Mammary epithelial cell (primary cell): ENCODE measurements at regions of chr6 and their contacts with region 1.

Region 1: GRCh38 chr6:31680840-31681671 is at the start of gene LY6G5C:
- DNase-seq: peak; percentile 69
- H3K4me3 ChIP-seq: peak within 1 kb of the TSS; percentile 42 to 53 (median 51)
- H3K27ac ChIP-seq: peak within 1 kb of the TSS; percentile 11
- H3K4me1 ChIP-seq: peaks cover 11% of the 10 kb centered on the region
- H3K27me3 ChIP-seq: no peaks in the 10 kb centered on the region
- CTCF ChIP-seq: peak; percentile 63 to 71
- total RNA-seq, gene LY6G5C: 1.4 TPM in 1 of 2 donors, not detected in the other

Region 2: GRCh38 chr6:31225735-31226134 is 455.3 kb before region 1 on chr6:
- CTCF ChIA-PET with region 1: no interaction called
- dilution Hi-C with region 1: no loop called
- in situ Hi-C with region 1: no loop called
- intact Hi-C with region 1: no loop called
- DNase-seq: no peak
- H3K4me3 ChIP-seq: no peak overlapping the region
- H3K27ac ChIP-seq: no peak overlapping the region
- H3K4me1 ChIP-seq: no peaks in the 10 kb centered on the region
- H3K27me3 ChIP-seq: peaks cover 2% of the 10 kb centered on the region
- CTCF ChIP-seq: no peak

Region 3: GRCh38 chr6:31739639-31740396 is 58.8 kb after region 1 on chr6 and contains the start of gene MSH5:
- CTCF ChIA-PET with region 1: no interaction called
- dilution Hi-C with region 1: no loop called
- in situ Hi-C with region 1: no loop called
- intact Hi-C with region 1: loop called (anchors 1 kb)
- DNase-seq: peak; percentile 99
- H3K4me3 ChIP-seq: peak within 1 kb of the TSS; percentile 67 to 76 (median 74)
- H3K27ac ChIP-seq: peak within 1 kb of the TSS; percentile 83
- H3K4me1 ChIP-seq: peaks cover 34% of the 10 kb centered on the region
- H3K27me3 ChIP-seq: no peaks in the 10 kb centered on the region
- CTCF ChIP-seq: no peak
- total RNA-seq, gene MSH5: 9.3 to 28.3 TPM

Region 4: DNA sequence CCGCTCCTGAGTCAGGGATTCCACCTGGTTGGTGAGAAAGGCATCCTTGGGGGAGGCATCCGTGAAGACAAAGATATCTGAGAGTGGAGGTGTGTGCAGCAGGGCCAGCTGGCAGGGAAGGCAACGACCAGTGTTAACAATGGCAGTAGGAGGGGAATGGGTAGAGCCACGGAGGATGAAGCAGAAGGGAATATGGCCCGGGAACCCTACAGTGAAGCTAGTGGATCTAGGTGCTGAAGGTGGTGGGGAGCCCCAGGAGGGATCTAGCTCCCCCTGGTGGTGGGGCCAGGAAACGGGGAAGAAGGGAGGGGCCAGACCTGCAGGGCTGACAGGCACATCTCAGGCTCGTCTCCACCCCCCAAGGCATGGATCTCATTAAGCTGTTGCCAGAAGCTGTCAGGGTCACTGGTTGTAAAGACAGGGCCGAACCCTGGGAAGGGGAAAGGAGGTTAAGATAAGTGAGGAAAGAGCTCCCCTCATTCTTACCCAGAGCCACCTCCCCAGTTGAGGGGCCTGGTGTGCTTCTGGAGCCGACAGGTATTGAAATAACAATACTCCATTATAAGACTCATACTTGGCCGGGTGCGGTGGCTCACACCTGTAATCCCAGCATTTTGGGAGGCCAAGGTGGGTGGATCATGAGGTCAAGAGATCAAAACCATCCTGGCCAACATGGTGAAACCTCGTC is 88.8 kb after region 1 on chr6:
- CTCF ChIA-PET with region 1: no interaction called
- dilution Hi-C with region 1: no loop called
- in situ Hi-C with region 1: no loop called
- intact Hi-C with region 1: loop called (anchors 1 kb)
- DNase-seq: peak; percentile 70
- H3K4me3 ChIP-seq: no peak overlapping the region
- H3K27ac ChIP-seq: no peak overlapping the region
- H3K4me1 ChIP-seq: peaks cover 7% of the 10 kb centered on the region
- H3K27me3 ChIP-seq: no peaks in the 10 kb centered on the region
- CTCF ChIP-seq: peak; percentile 88 to 95

Region 5: DNA sequence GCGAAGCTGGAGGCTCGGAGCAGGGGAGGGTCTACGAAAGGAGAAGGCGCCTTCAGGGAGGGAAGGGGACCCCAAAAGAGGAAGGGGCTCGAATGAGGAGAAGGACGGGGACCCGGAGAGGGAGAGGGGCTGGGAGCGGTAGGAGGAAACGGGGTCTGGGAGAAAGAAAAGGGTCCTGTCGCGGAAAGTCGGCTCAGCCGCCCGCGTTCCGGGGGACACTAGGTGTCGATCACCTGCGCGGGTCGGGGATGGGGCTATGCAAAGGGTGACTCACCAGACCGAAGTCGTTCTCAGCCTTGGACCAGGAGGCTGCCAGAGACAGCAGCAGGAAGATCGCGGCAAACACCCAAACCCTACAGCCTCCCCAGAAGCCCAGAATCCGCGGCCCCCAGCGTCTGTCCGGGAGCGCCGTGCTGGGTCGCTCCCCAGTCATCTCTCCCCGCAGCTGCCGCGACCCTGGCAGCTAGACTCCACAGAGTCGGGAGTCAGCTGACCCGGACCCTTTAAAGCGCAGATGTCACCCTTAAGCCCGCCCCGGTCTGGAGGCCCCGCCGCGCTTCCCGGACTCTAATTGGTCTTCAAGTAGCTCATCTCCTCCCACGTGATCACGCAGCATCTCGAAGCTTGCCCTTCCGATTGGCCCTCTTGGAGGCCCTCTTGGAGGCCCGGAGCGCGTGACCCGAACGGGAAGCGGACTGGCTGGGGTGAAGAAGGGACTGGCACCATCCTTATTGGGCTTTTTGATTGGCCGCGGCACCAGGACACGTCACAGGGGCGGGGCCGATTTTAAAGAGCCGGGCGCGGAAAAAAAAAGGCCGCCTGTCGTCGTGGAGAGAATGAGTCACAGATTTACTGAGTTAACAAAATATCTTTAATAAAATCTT is 181.5 kb after region 1 on chr6 and contains the start of gene NEU1:
- CTCF ChIA-PET with region 1: no interaction called
- dilution Hi-C with region 1: no loop called
- in situ Hi-C with region 1: no loop called
- intact Hi-C with region 1: loop called (anchors 1 kb)
- DNase-seq: peak; percentile 100
- H3K4me3 ChIP-seq: peak within 1 kb of the TSS; percentile 76 to 94 (median 86)
- H3K27ac ChIP-seq: peak within 1 kb of the TSS; percentile 50
- H3K4me1 ChIP-seq: peaks cover 10% of the 10 kb centered on the region
- H3K27me3 ChIP-seq: no peaks in the 10 kb centered on the region
- CTCF ChIP-seq: no peak
- total RNA-seq, gene NEU1: 27.8 to 42.5 TPM

Region 6: DNA sequence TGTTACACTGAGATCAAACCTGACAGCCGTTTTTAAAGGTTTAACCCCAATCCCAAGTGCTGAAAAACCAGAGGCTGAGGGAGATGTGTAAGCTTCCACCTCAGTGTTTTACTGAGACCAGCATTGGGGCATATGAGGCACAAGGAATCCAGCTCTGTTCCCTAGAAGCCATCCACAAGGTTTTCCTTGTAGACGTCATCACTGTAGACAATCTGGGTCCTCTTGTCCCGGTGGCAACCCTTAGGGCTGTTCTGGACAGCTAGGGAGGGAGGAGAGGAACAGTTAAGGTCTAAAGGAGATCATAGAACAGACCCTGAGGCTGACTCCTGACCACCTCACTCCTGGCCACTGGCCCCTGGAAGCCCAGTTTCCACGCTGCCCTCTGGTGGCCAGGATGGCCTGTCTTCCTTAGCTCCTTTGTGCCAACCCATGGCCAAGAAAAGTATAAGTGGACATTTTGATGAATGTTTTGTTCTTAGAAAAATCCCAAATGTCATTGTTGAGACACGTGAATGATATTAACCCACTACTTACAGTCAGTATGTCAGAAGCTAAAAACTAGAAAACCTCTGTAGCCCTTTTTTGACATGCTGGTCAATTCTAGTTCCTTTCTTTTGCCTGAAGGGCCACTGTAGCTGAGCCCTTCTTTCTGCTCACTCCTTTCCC is 271.2 kb after region 1 on chr6:
- CTCF ChIA-PET with region 1: no interaction called
- dilution Hi-C with region 1: no loop called
- in situ Hi-C with region 1: no loop called
- intact Hi-C with region 1: loop called (anchors 2 kb)
- DNase-seq: peak; percentile 41
- H3K4me3 ChIP-seq: no peak overlapping the region
- H3K27ac ChIP-seq: no peak overlapping the region
- H3K4me1 ChIP-seq: no peaks in the 10 kb centered on the region
- H3K27me3 ChIP-seq: no peaks in the 10 kb centered on the region
- CTCF ChIP-seq: peak; percentile 74 to 87